A673 (cell line): ENCODE measurements at regions of chr3 and their contacts with region 1.

Region 1: DNA sequence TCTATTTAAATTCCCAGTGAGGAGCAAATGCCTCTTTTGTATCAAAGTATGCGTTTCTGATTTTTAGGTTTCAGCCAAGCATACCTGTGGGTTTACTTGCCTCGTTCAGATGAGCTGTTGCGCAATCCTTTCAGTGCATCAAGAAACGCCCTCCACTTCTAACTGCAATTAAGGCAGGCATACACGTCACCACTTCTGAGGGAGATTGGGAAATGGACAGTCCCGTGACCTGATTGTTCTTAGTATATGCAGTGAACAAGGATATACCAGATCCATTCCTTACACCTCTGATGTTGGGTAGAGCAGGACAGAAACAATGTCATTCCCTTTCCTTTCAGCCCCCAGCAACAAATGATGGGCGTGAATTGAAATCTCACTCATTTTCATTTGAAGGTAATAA is 219.0 kb downstream of the ITPR1 start:
- DNase-seq: no peak
- H3K4me3 ChIP-seq: no peak overlapping the region
- H3K27ac ChIP-seq: no peak overlapping the region
- H3K4me1 ChIP-seq: peaks cover 4% of the 10 kb centered on the region
- H3K27me3 ChIP-seq: no peaks in the 10 kb centered on the region
- CTCF ChIP-seq: no peak

Region 2: GRCh38 chr3:4978204-4978965 is 266.2 kb after region 1 on chr3:
- CTCF ChIA-PET with region 1: interaction called, 20 read pairs
- POLR2A ChIA-PET with region 1: no interaction called
- intact Hi-C with region 1: loop called (anchors 5 kb)
- DNase-seq: peak; percentile 93
- H3K4me3 ChIP-seq: peak overlapping the region; percentile 63
- H3K27ac ChIP-seq: peak overlapping the region; percentile 69
- H3K4me1 ChIP-seq: peaks cover 31% of the 10 kb centered on the region
- H3K27me3 ChIP-seq: no peaks in the 10 kb centered on the region
- CTCF ChIP-seq: 0 out of 2 replicates have a peak, but pooled peaks have one; percentile 17

Region 3: DNA sequence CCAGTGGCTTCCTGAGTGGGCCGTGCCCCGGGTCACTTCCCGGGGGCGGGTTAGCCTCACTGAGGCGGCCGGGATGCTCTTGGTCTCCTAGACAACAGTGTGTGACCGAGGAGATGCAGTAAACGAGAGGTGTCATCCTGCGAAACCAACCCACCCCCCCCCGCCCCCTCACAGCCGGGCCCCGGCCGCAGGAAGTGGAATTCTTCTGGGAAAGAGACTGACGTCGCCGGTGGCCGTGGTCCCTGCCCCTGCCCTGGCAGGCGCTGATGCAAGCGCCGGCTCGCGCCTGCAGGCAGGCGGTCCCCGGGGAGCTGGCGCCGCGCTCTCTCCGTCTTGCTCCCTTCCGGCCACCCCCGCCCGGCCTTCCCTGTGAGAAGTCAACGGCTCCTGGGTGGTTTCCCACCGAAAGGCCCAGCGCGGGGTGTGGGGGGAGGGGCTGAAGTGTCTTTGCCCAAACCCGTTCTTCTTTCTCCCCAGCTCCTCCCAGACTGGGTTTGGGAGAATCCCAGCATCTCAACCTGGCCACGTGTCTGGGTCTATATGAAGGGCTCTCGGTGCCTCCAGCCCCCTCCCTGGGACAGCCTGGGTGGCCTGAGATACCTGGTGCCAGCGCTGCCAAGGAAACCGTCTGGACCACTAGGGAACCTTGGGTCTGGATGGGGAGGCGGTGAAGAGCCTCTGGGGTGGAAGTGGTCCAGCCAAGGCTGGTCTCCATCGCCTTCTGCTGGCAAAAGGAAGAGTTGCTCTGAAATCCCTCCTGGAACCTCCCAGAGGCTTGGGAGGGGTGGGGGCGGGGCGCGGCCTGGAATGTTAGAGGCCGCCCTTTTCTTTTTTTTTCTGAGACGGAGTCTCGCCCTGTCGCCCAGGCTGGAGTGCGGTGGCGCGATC is 314.4 kb after region 1 on chr3:
- CTCF ChIA-PET with region 1: interaction called, 16 read pairs
- POLR2A ChIA-PET with region 1: no interaction called
- intact Hi-C with region 1: loop called (anchors 2 kb)
- DNase-seq: peak; percentile 89
- H3K4me3 ChIP-seq: peak overlapping the region; percentile 43
- H3K27ac ChIP-seq: no peak overlapping the region
- H3K4me1 ChIP-seq: no peaks in the 10 kb centered on the region
- H3K27me3 ChIP-seq: no peaks in the 10 kb centered on the region
- CTCF ChIP-seq: peak; percentile 63

Region 4: GRCh38 chr3:5057857-5058324 is 345.7 kb after region 1 on chr3:
- CTCF ChIA-PET with region 1: interaction called, 16 read pairs
- POLR2A ChIA-PET with region 1: no interaction called
- intact Hi-C with region 1: loop called (anchors 1 kb)
- DNase-seq: peak; percentile 80
- H3K4me3 ChIP-seq: no peak overlapping the region
- H3K27ac ChIP-seq: no peak overlapping the region
- H3K4me1 ChIP-seq: peaks cover 15% of the 10 kb centered on the region
- H3K27me3 ChIP-seq: no peaks in the 10 kb centered on the region
- CTCF ChIP-seq: peak; percentile 66

Region 5: DNA sequence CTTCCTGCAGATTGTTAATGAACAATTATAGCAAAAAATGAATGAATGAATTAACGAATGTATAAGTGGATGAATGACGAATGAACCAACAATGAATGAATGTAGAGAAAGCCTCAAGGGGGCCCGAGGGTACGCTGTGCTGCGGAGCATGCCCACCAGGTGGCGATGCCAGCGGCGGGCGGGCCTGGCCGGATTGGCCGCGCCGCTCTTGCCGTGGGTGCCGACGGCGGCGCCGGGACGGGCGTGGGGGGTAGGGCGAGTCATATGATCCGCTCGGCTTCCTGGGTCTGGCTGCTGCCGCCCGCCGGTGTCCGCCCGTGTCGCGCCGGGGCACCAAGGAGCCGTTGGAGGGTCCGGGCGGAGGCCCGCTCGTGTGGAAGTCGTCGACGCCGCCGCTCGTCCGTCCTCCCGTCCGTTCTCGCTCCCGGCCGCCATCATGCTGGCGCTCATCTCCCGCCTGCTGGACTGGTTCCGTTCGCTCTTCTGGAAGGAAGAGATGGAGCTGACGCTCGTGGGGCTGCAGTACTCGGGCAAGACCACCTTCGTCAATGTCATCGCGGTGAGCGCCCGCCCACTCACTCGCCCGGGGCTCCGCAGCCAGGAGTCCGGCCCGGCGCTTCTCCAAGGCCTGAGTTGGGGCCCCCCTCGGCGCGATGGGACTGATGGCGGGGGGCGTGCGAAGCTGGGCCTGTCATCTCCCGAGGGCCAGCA is 410.0 kb after region 1 on chr3 and contains the start of gene ARL8B:
- CTCF ChIA-PET with region 1: no interaction called
- POLR2A ChIA-PET with region 1: no interaction called
- intact Hi-C with region 1: loop called (anchors 5 kb)
- DNase-seq: peak; percentile 91
- H3K4me3 ChIP-seq: peak within 1 kb of the TSS; percentile 98
- H3K27ac ChIP-seq: peak within 1 kb of the TSS; percentile 86
- H3K4me1 ChIP-seq: peaks cover 12% of the 10 kb centered on the region
- H3K27me3 ChIP-seq: no peaks in the 10 kb centered on the region
- CTCF ChIP-seq: peak; percentile 91
- total RNA-seq, gene ARL8B: 44.7 and 54.0 TPM in 2 replicates

Region 6: GRCh38 chr3:5531741-5532290 is 819.7 kb after region 1 on chr3:
- CTCF ChIA-PET with region 1: no interaction called
- POLR2A ChIA-PET with region 1: no interaction called
- intact Hi-C with region 1: no loop called
- DNase-seq: no peak
- H3K4me3 ChIP-seq: no peak overlapping the region
- H3K27ac ChIP-seq: no peak overlapping the region
- H3K4me1 ChIP-seq: no peaks in the 10 kb centered on the region
- H3K27me3 ChIP-seq: no peaks in the 10 kb centered on the region
- CTCF ChIP-seq: no peak